Breast epithelium (tissue), 4 donors: ENCODE measurements at regions of chr3 and their contacts with region 1.

Region 1: DNA sequence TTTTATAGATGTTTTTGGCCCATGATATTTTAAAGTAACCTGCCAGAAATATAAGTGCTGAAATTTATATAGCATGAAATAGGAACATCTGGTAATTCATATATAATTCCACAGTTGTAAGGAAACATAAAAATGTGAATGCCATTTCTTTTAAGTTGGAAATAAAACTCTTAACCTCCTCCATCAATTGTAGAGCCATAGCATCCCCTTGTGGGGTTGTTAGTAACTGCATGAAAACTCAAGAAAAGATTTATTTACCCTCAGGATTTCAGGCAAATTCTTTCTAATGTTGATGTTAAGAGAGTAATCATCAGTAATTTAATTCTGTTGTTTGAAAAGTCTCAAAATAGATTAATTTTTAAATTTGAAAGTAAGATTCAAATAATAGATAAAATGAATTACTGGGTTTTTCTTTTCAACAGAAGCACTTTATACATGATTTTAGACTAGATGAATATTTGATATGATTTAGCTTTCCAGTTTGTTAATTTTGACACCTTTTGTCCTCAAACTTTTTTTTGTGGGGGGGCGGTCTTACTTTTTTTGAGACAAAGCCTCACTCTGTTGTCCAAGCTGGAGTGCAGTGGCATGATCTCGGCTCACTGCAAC is 74.7 kb downstream of the RASA2 start:
- DNase-seq: no peak
- H3K4me3 ChIP-seq: no peak overlapping the region
- H3K27ac ChIP-seq: no peak overlapping the region
- H3K4me1 ChIP-seq: no peaks in the 10 kb centered on the region
- H3K27me3 ChIP-seq: no peaks in the 10 kb centered on the region
- CTCF ChIP-seq: peak; percentile 98 to 100 (median 99)
- POLR2A ChIP-seq: no peak

Region 2: GRCh38 chr3:140941434-140942220 is 619.9 kb before region 1 on chr3 and contains the start of gene SLC25A36:
- intact Hi-C with region 1: no loop called
- DNase-seq: peak; percentile 95 to 96
- H3K4me3 ChIP-seq: peak within 1 kb of the TSS; percentile 89 to 96 (median 95)
- H3K27ac ChIP-seq: peak within 1 kb of the TSS; percentile 98 to 99
- H3K4me1 ChIP-seq: no peaks in the 10 kb centered on the region
- H3K27me3 ChIP-seq: no peaks in the 10 kb centered on the region
- CTCF ChIP-seq: peak in 2 of 3 donors; percentile 12 to 15
- POLR2A ChIP-seq: peak; percentile 89
- total RNA-seq, gene SLC25A36: 74.7 to 111 (median 86.7) TPM

Region 3: DNA sequence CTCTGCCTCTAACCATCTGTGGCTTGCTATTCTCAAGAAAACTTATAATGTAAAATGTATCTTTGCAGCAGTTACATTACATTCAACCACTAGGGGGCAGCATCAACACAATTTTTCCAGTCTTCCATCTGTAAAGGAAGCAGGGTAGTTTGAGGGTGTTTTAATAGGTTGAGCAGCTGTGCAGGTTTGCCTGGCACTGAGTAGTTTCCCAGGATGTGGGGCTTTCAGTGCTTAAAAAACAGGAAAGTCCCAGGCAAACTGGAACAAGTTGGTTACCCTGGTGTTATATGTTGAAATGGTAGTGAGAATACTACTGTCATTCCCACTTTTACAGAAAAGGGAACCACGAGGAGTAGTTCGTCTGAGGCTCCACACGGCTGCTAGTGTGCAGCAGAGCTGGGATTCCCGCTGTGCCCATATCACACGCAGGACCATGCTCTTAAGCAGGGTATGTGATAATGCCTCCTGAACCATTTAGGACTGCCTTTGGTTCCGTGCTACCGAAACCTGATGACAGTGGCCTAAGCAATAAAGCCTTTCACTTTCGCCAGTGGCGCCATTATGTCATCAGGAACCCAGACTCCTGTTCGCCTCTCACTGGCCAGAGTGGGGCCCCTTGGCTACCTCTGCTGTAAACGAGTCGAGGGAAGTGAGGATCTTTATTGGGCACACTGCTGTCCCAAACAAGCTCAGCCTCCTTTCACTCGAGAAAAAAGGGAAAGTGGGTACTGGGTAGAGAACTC is 257.9 kb before region 1 on chr3:
- intact Hi-C with region 1: loop called (anchors 10 kb)
- DNase-seq: peak in 1 of 2 donors; percentile 38
- H3K4me3 ChIP-seq: no peak overlapping the region
- H3K27ac ChIP-seq: no peak overlapping the region
- H3K4me1 ChIP-seq: no peaks in the 10 kb centered on the region
- H3K27me3 ChIP-seq: no peaks in the 10 kb centered on the region
- CTCF ChIP-seq: peak; percentile 69 to 79 (median 73)
- POLR2A ChIP-seq: no peak

Region 4: GRCh38 chr3:141460097-141460704 is 101.3 kb before region 1 on chr3:
- intact Hi-C with region 1: loop called (anchors 5 kb)
- DNase-seq: peak; percentile 83 to 86
- H3K4me3 ChIP-seq: no peak overlapping the region
- H3K27ac ChIP-seq: no peak overlapping the region
- H3K4me1 ChIP-seq: no peaks in the 10 kb centered on the region
- H3K27me3 ChIP-seq: no peaks in the 10 kb centered on the region
- CTCF ChIP-seq: peak in 2 of 3 donors; percentile 78 to 83
- POLR2A ChIP-seq: no peak

Region 5: GRCh38 chr3:141544697-141545096 is 16.8 kb before region 1 on chr3:
- intact Hi-C with region 1: no loop called
- DNase-seq: no peak
- H3K4me3 ChIP-seq: no peak overlapping the region
- H3K27ac ChIP-seq: no peak overlapping the region
- H3K4me1 ChIP-seq: no peaks in the 10 kb centered on the region
- H3K27me3 ChIP-seq: no peaks in the 10 kb centered on the region
- CTCF ChIP-seq: no peak
- POLR2A ChIP-seq: no peak